PC-3 (cell line): ENCODE measurements at regions of chr17 and their contacts with region 1.

Region 1: GRCh38 chr17:48636177-48637018 is 10.2 kb upstream of the HOXB9 start:
- DNase-seq: peak; percentile 84
- ATAC-seq: peak; percentile 85
- H3K4me3 ChIP-seq: peak overlapping the region; percentile 25; the same call in 1 of the 2 replicates
- H3K27ac ChIP-seq: no peak overlapping the region
- H3K4me1 ChIP-seq: peaks cover 13% of the 10 kb centered on the region; the same call in 1 of the 2 replicates
- H3K27me3 ChIP-seq: peaks cover 9% of the 10 kb centered on the region
- CTCF ChIP-seq: peak; percentile 81

Region 2: GRCh38 chr17:48231995-48232959 is 404.1 kb before region 1 on chr17:
- CTCF ChIA-PET with region 1: interaction called, 26 read pairs
- POLR2A ChIA-PET with region 1: no interaction called
- intact Hi-C with region 1: no loop called
- DNase-seq: no peak
- ATAC-seq: no peak
- H3K4me3 ChIP-seq: no peak overlapping the region
- H3K27ac ChIP-seq: no peak overlapping the region
- H3K4me1 ChIP-seq: peaks cover 19% of the 10 kb centered on the region
- H3K27me3 ChIP-seq: no peaks in the 10 kb centered on the region
- CTCF ChIP-seq: no peak

Region 3: DNA sequence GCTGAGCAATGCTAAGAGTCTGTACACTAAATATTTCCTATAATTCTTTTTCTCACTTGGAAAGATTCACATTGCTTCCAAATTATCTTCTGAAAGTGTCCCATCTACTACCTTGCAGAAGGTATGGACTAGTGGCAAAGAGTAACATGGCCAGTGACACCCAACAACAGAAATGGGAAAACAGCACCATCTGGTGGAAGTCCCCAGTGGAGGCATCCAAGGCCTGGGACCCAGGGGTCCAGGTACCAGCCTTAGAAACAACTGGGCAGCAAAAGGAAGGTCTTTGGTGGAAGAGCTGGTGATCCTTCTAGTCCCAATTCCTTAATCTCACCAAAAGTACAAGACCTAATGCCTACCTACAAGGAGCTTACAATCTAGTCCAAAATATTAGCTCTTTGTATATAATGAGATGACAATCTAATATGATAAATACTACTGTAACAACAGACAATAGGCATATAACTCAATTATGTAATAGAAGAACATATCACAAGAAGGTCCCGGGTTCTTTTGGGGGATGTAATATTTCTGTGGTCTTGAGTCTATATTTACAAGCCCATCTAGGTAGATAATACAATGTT is 261.7 kb before region 1 on chr17:
- CTCF ChIA-PET with region 1: interaction called, 15 read pairs
- POLR2A ChIA-PET with region 1: no interaction called
- intact Hi-C with region 1: no loop called
- DNase-seq: peak; percentile 72
- ATAC-seq: peak; percentile 91
- H3K4me3 ChIP-seq: no peak overlapping the region
- H3K27ac ChIP-seq: no peak overlapping the region
- H3K4me1 ChIP-seq: no peaks in the 10 kb centered on the region
- H3K27me3 ChIP-seq: no peaks in the 10 kb centered on the region
- CTCF ChIP-seq: peak; percentile 89

Region 4: GRCh38 chr17:48625495-48626244 is 10.7 kb before region 1 on chr17:
- CTCF ChIA-PET with region 1: interaction called, 21 read pairs
- POLR2A ChIA-PET with region 1: interaction called, 23 read pairs
- intact Hi-C with region 1: no loop called
- DNase-seq: peak; percentile 77
- ATAC-seq: peak; percentile 84
- H3K4me3 ChIP-seq: peak overlapping the region; percentile 70
- H3K27ac ChIP-seq: no peak overlapping the region
- H3K4me1 ChIP-seq: peaks cover 12% of the 10 kb centered on the region
- H3K27me3 ChIP-seq: peaks cover 59% of the 10 kb centered on the region
- CTCF ChIP-seq: no peak

Region 5: GRCh38 chr17:48671697-48672171 is 35.3 kb after region 1 on chr17:
- CTCF ChIA-PET with region 1: interaction called, 10 read pairs
- POLR2A ChIA-PET with region 1: interaction called, 24 read pairs
- intact Hi-C with region 1: no loop called
- DNase-seq: peak; percentile 95
- ATAC-seq: peak; percentile 72
- H3K4me3 ChIP-seq: peak overlapping the region; percentile 64
- H3K27ac ChIP-seq: no peak overlapping the region
- H3K4me1 ChIP-seq: peaks cover 5% of the 10 kb centered on the region; the same call in 1 of the 2 replicates
- H3K27me3 ChIP-seq: no peaks in the 10 kb centered on the region
- CTCF ChIP-seq: peak; percentile 96

Region 6: DNA sequence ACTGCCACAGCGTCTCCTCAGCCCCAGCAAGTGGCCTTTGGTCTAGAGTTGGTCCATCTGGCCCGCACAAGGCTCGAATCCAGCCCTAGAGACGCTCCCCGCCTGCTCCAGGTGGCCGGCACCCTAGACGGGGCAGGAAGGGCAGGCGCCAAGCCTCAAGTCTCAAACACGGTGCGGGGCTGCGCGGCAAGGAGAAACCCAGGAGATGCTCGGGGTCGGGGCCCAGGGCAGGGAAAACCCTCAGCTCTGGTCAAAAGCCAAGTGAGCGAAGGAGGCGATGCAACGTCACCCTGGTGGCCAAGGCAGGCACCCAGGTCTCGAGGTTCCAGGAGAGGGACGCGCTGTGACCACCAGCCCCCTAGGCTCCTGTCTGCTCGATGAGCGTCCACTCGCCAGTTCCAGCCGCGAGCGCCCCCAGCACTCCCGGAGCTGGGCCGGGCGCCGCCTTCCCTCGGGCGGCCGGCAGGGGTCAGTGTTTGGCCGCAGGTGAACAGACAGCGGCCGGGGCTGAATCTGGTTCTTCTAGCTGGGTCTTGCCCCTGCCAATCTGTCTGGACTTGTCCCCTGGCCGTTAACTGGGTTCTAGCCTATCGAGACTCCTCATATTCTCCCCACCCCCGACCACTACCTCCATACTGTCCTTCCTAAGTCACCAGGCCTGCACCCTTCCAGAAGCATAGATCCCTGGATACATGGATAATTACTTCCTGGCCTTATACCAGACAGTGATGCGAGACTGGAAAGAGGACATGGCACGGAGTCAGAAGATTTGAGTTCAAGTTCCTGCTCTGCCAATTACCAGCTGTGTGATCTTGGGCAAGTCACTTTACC is 42.0 kb after region 1 on chr17:
- CTCF ChIA-PET with region 1: interaction called, 6 read pairs
- POLR2A ChIA-PET with region 1: interaction called, 24 read pairs
- intact Hi-C with region 1: no loop called
- DNase-seq: peak; percentile 90
- ATAC-seq: peak; percentile 91
- H3K4me3 ChIP-seq: peak overlapping the region; percentile 68
- H3K27ac ChIP-seq: no peak overlapping the region
- H3K4me1 ChIP-seq: peaks cover 11% of the 10 kb centered on the region; the same call in 1 of the 2 replicates
- H3K27me3 ChIP-seq: no peaks in the 10 kb centered on the region
- CTCF ChIP-seq: peak; percentile 100

Region 7: GRCh38 chr17:48738803-48739526 is 102.6 kb after region 1 on chr17:
- CTCF ChIA-PET with region 1: interaction called, 13 read pairs
- POLR2A ChIA-PET with region 1: no interaction called
- intact Hi-C with region 1: no loop called
- DNase-seq: peak; percentile 91
- ATAC-seq: peak; percentile 53
- H3K4me3 ChIP-seq: peak overlapping the region; percentile 66
- H3K27ac ChIP-seq: peak overlapping the region; percentile 61
- H3K4me1 ChIP-seq: peaks cover 52% of the 10 kb centered on the region
- H3K27me3 ChIP-seq: no peaks in the 10 kb centered on the region
- CTCF ChIP-seq: no peak